Vagina (tissue), 2 donors: ENCODE measurements at regions of chr18 and their contacts with region 1.

Region 1: GRCh38 chr18:36572135-36572856 is 256.5 kb downstream of the TPGS2 start:
- DNase-seq: peak in 1 of 2 donors; percentile 56
- H3K4me3 ChIP-seq: no peak overlapping the region
- H3K27ac ChIP-seq: no peak overlapping the region
- H3K4me1 ChIP-seq: no peaks in the 10 kb centered on the region
- H3K27me3 ChIP-seq: no peaks in the 10 kb centered on the region
- CTCF ChIP-seq: peak in 2 of 3 experiments; percentile 12 to 46
- POLR2A ChIP-seq: no peak

Region 2: DNA sequence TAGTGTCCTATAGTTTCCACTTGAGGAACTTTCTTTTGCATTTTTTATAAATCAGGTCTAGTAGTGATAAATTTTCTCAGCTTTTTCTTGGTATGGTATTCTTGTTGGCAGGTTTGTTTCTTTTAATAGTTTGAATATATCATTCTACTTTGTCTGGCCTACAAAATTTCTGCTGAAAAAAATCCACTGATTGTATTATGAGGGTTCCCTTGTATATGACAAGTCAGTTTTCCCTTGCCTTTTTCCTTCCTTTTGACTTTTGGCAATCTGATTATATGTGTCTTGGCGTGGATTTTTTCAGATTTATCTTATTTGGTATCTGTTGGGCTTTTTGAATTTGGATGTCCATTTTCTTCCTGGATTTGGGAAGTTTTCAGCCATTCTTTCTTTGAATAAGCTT is 343.1 kb before region 1 on chr18:
- intact Hi-C with region 1: no loop called
- DNase-seq: no peak
- H3K4me3 ChIP-seq: no peak overlapping the region
- H3K27ac ChIP-seq: no peak overlapping the region
- H3K4me1 ChIP-seq: no peaks in the 10 kb centered on the region
- H3K27me3 ChIP-seq: no peaks in the 10 kb centered on the region
- CTCF ChIP-seq: no peak
- POLR2A ChIP-seq: no peak

Region 3: GRCh38 chr18:36296650-36297416 is 275.5 kb before region 1 on chr18:
- intact Hi-C with region 1: loop called (anchors 10 kb)
- DNase-seq: peak; percentile 89 to 92
- H3K4me3 ChIP-seq: peak overlapping the region; percentile 59 to 69
- H3K27ac ChIP-seq: peak overlapping the region; percentile 62
- H3K4me1 ChIP-seq: peaks cover 18% of the 10 kb centered on the region
- H3K27me3 ChIP-seq: no peaks in the 10 kb centered on the region
- CTCF ChIP-seq: no peak
- POLR2A ChIP-seq: no peak